Testis (tissue), 5 donors: ENCODE measurements at regions of chr11 and their contacts with region 1.

Region 1: DNA sequence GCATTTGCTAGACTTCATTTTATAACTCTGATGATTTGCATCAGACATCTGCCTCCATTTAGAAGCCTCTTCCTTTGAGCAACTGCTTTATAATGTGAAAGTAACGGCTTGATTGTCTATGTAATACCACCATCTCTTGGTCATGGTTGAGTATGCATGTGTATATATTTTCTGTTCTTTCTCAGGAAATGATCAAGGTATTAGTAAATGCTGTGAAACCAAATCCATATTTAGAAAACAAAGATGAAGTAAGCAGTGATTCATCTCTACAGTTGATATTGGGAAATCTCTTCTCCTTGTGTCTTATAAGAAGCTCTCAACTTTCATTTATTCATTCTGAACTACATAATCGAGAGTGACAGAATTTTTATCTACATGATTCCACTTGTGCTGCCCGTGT is 104.6 kb upstream of the ANO3 start:
- DNase-seq: no peak
- H3K4me3 ChIP-seq: no peak overlapping the region
- H3K27ac ChIP-seq: no peak overlapping the region
- H3K4me1 ChIP-seq: no peaks in the 10 kb centered on the region
- H3K27me3 ChIP-seq: no peaks in the 10 kb centered on the region
- CTCF ChIP-seq: peak in 2 of 3 experiments; percentile 18 to 23
- POLR2A ChIP-seq: no peak

Region 2: GRCh38 chr11:25970726-25971508 is 256.4 kb before region 1 on chr11:
- intact Hi-C with region 1: loop called (anchors 10 kb)
- DNase-seq: no peak
- H3K4me3 ChIP-seq: no peak overlapping the region
- H3K27ac ChIP-seq: no peak overlapping the region
- H3K4me1 ChIP-seq: no peaks in the 10 kb centered on the region
- H3K27me3 ChIP-seq: no peaks in the 10 kb centered on the region
- CTCF ChIP-seq: no peak
- POLR2A ChIP-seq: no peak